ENCODE measurements at regions of chr7 and their contacts with region 1.

Region 1: GRCh38 chr7:69893906-69894305 is 295.6 kb downstream of the AUTS2 start:
- DNase-seq: peak; percentile 67
- H3K4me3 ChIP-seq: no peak overlapping the region
- H3K27ac ChIP-seq: peak overlapping the region; percentile 20
- H3K4me1 ChIP-seq: peaks cover 83% of the 10 kb centered on the region
- CTCF ChIP-seq: peak; percentile 76

Region 2: DNA sequence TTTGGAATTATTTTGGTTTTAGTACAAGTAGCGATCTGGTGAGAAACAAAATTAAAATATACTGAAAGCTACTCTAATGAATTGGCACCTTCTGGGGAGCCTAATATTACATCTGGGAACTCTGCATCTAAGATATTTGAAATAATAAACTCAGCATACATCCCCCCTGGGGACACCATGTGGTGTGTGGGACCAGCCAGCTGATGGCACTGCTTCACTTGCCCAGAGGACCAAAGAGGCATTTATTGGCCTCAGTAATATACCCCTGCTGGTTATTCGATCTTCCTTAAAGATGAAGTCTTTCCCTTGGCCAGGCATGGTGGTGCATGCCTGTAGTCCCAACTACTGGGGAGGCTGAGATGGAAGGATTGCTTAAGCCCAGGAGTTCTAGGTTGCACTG is 490.7 kb before region 1 on chr7:
- CTCF ChIA-PET with region 1: no interaction called
- POLR2A ChIA-PET with region 1: no interaction called
- intact Hi-C with region 1: loop called (anchors 5 kb)
- DNase-seq: peak; percentile 73
- H3K4me3 ChIP-seq: no peak overlapping the region
- H3K27ac ChIP-seq: no peak overlapping the region
- H3K4me1 ChIP-seq: no peaks in the 10 kb centered on the region
- CTCF ChIP-seq: peak; percentile 82

Region 3: GRCh38 chr7:69498671-69499070 is 395.2 kb before region 1 on chr7:
- CTCF ChIA-PET with region 1: no interaction called
- POLR2A ChIA-PET with region 1: no interaction called
- intact Hi-C with region 1: loop called (anchors 5 kb)
- DNase-seq: no peak
- H3K4me3 ChIP-seq: no peak overlapping the region
- H3K27ac ChIP-seq: no peak overlapping the region
- H3K4me1 ChIP-seq: peaks cover 41% of the 10 kb centered on the region
- CTCF ChIP-seq: no peak

Region 4: DNA sequence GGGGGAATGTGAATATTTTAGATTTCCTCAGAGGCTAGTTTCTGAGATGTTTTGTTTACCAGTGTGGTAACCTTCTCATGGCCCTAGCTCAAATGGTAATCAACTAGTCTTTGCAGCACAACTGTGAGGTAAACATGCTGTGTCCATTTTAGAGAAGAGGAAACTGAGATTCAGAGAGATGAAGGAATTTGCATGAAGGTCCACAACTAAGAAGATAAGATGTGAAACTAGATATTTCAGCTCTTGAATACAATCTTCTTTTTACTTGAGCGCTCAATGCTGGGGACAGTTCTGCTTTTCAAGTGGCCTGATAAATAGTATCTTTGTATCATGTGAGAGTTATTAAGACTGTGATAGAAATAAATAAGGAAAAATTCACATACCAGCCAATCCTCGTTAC is 50.3 kb before region 1 on chr7:
- CTCF ChIA-PET with region 1: no interaction called
- POLR2A ChIA-PET with region 1: no interaction called
- intact Hi-C with region 1: loop called (anchors 2 kb)
- DNase-seq: peak; percentile 57
- H3K4me3 ChIP-seq: peak overlapping the region; percentile 20
- H3K27ac ChIP-seq: peak overlapping the region; percentile 39
- H3K4me1 ChIP-seq: peaks cover 84% of the 10 kb centered on the region
- CTCF ChIP-seq: no peak

Region 5: GRCh38 chr7:69966766-69967591 is 73.1 kb after region 1 on chr7:
- CTCF ChIA-PET with region 1: no interaction called
- POLR2A ChIA-PET with region 1: no interaction called
- intact Hi-C with region 1: no loop called
- DNase-seq: no peak
- H3K4me3 ChIP-seq: no peak overlapping the region
- H3K27ac ChIP-seq: no peak overlapping the region
- H3K4me1 ChIP-seq: peaks cover 47% of the 10 kb centered on the region
- CTCF ChIP-seq: no peak

Region 6: GRCh38 chr7:70027867-70028266 is 134.0 kb after region 1 on chr7:
- CTCF ChIA-PET with region 1: no interaction called
- POLR2A ChIA-PET with region 1: interaction called, 3 read pairs
- intact Hi-C with region 1: loop called (anchors 5 kb)
- DNase-seq: peak; percentile 82
- H3K4me3 ChIP-seq: peak overlapping the region; percentile 27
- H3K27ac ChIP-seq: peak overlapping the region; percentile 64
- H3K4me1 ChIP-seq: peaks cover 55% of the 10 kb centered on the region
- CTCF ChIP-seq: no peak

Region 7: GRCh38 chr7:70040970-70041766 is 147.3 kb after region 1 on chr7:
- CTCF ChIA-PET with region 1: no interaction called
- POLR2A ChIA-PET with region 1: no interaction called
- intact Hi-C with region 1: loop called (anchors 2 kb)
- DNase-seq: peak; percentile 28
- H3K4me3 ChIP-seq: no peak overlapping the region
- H3K27ac ChIP-seq: no peak overlapping the region
- H3K4me1 ChIP-seq: peaks cover 12% of the 10 kb centered on the region
- CTCF ChIP-seq: peak; percentile 82

Measured in OCI-LY7 (cell line).